ENCODE measurements at regions of chr1 and their contacts with region 1.

Region 1: GRCh38 chr1:151198255-151199127 is at the start of gene PIP5K1A:
- DNase-seq: peak; percentile 95
- ATAC-seq: peak; percentile 73
- H3K4me3 ChIP-seq: peak within 1 kb of the TSS; percentile 79 to 90
- H3K27ac ChIP-seq: peak within 1 kb of the TSS; percentile 83
- H3K4me1 ChIP-seq: peaks cover 26 to 40% of the 10 kb centered on the region in 2 experiments
- H3K27me3 ChIP-seq: no peaks in the 10 kb centered on the region
- CTCF ChIP-seq: no peak
- POLR2A ChIP-seq: peak; percentile 63
- RAD21 ChIP-seq: no peak
- total RNA-seq, gene PIP5K1A: 75.4 TPM

Region 2: DNA sequence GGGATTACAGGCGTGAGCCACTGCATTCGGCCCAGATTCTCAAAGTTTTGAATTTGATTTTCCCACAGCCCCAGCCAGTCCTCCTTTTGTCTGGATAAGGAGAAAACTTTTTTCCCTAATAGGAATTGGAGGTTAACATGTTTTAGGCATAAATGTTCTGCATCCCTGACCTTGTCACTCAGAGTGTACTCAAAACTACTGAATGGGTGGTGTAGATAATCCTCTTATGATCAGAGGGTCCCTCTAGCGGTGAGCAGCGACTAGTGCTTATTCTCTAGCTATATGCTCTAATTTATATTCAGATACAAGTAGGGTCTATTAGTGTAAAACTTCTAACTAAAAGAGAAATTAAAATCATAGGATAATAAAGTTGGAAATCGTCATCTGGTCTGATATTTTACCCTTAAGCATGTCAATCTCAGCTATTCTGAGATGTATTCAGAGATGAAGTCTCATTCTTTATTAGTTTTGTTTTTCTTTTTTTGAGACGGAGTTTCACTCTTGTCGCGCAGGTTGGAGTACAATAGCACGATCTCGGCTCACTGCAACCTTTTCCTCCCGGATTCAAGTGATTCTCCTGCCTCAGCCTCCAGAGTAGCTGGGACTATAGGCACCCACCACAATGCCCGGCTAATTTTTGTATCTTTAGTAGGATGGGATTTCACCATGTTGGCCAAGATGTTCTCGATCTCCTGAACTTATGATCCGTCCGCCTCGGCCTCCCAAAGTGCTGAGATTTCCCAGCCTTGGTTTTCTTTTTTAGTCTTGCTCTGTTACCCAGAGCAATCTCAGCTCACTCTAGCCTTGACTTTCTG is 53.4 kb after region 1 on chr1:
- CTCF ChIA-PET with region 1: interaction called, 12 read pairs
- POLR2A ChIA-PET with region 1: interaction called, 4 read pairs
- RAD21 ChIA-PET with region 1: interaction called in 1 of 2 experiments, 4 read pairs
- intact Hi-C with region 1: loop called (anchors 1 kb)
- DNase-seq: peak; percentile 60
- ATAC-seq: peak; percentile 63
- H3K4me3 ChIP-seq: no peak overlapping the region
- H3K27ac ChIP-seq: no peak overlapping the region
- H3K4me1 ChIP-seq: peaks cover 7 to 12% of the 10 kb centered on the region in 2 experiments; a peak in 3 of 4 replicates
- H3K27me3 ChIP-seq: no peaks in the 10 kb centered on the region
- CTCF ChIP-seq: peak; percentile 72 to 91 (median 84); a peak in 5 of 6 replicates
- POLR2A ChIP-seq: no peak
- RAD21 ChIP-seq: peak; percentile 77

Region 3: DNA sequence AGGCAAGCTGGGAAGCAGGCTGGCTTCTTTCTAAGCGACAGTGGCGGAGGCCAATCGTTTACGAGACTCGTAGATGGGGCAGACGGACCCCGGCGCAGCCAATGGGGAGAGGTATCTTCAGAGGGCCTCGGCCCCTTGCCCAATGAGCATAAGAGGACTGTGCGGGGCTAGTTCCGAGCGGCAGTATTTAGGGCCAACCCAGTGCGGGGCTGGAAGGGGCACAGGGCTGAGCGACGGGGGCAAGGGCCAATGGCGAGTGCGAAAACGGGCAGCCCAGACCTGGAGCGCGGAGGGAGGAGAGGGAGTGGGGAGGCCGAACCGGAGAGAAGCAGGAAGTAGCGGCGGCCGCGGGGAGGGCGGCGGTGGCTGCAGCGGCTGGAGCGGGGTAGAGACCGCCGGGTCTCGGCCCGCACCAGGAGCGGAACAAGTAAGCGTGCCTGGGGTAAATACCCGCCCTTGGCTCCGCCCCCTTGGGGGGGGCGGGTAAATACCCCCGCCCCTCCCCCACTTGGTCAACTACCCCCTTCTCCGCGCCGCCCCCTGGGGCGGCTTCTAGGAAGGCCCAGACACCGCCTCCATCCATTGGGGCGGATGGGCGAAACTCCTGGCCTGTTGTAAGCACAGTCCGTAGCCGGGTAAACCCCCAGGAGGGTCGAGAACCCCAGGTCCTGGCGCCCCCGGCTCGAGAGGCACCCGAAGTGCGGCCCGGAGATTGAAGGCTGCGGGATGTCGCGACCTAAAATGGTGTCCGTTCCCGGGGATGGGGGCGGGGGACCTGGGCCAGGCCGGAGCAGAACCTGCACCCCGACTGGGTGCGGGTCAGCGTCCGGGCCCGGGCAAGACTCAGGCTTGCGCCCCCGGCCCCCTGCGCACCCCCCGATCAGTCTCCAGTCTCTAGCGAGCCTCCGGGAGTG is 83.7 kb after region 1 on chr1 and contains the start of gene ZNF687:
- CTCF ChIA-PET with region 1: no interaction called
- POLR2A ChIA-PET with region 1: interaction called, 6 read pairs
- RAD21 ChIA-PET with region 1: interaction called in 1 of 2 experiments, 3 read pairs
- intact Hi-C with region 1: loop called (anchors 2 kb)
- DNase-seq: peak; percentile 100
- ATAC-seq: peak; percentile 92
- H3K4me3 ChIP-seq: peak within 1 kb of the TSS; percentile 59 to 79
- H3K27ac ChIP-seq: peak within 1 kb of the TSS; percentile 92
- H3K4me1 ChIP-seq: peaks cover 11 to 25% of the 10 kb centered on the region in 2 experiments
- H3K27me3 ChIP-seq: no peaks in the 10 kb centered on the region
- CTCF ChIP-seq: no peak
- POLR2A ChIP-seq: peak; percentile 32
- RAD21 ChIP-seq: no peak
- total RNA-seq, gene ZNF687: 34.3 TPM

Region 4: GRCh38 chr1:151311589-151312331 is 113.3 kb after region 1 on chr1:
- CTCF ChIA-PET with region 1: no interaction called
- POLR2A ChIA-PET with region 1: no interaction called
- RAD21 ChIA-PET with region 1: no interaction called
- intact Hi-C with region 1: loop called (anchors 1 kb)
- DNase-seq: peak; percentile 96
- ATAC-seq: peak; percentile 98
- H3K4me3 ChIP-seq: no peak overlapping the region
- H3K27ac ChIP-seq: peak overlapping the region; percentile 48; the same call in 1 of the 2 replicates
- H3K4me1 ChIP-seq: peaks cover 16 to 34% of the 10 kb centered on the region in 2 experiments
- H3K27me3 ChIP-seq: no peaks in the 10 kb centered on the region
- CTCF ChIP-seq: no peak
- POLR2A ChIP-seq: no peak
- RAD21 ChIP-seq: peak; percentile 24; the same call in 1 of the 2 replicates

Region 5: DNA sequence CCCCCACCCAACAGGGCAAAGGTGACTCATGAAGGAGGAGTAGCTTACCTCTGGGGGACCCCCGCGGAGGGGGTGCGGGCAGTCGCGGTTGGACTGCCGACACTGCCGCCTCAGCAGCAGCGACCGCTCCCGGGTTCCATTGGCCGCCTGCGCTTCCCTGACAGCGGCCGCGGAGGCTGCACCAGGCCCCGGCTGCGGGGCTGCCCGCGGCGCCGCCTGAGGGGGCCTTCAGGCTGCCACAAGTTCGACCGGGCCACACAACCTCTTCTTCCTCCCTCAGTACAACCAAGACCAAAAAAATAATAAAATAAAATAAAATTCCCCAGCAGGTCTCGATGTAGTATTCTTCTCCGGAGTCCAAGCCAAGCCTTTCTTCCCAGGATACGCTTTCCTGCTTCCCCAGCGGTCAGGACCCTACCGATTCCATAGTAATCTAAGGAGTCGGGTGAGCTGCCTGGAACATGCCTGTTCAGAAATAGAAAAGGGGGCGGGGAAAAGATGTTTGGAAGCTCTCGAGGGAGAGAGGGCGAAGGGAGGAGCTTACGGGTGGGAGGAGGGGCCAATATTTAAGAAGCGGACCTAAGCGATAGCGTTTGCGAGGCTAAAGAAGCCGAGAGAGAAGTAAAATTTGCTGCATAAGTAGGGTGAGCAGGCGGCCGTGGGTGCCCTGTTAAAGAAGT is 128.9 kb after region 1 on chr1 and contains the start of gene PI4KB:
- CTCF ChIA-PET with region 1: no interaction called
- POLR2A ChIA-PET with region 1: no interaction called
- RAD21 ChIA-PET with region 1: no interaction called
- intact Hi-C with region 1: loop called (anchors 5 kb)
- DNase-seq: peak; percentile 97
- ATAC-seq: peak; percentile 96
- H3K4me3 ChIP-seq: peak within 1 kb of the TSS; percentile 80 to 82
- H3K27ac ChIP-seq: peak within 1 kb of the TSS; percentile 80
- H3K4me1 ChIP-seq: peaks cover 12 to 24% of the 10 kb centered on the region in 2 experiments
- H3K27me3 ChIP-seq: no peaks in the 10 kb centered on the region
- CTCF ChIP-seq: no peak
- POLR2A ChIP-seq: peak; percentile 68
- RAD21 ChIP-seq: no peak
- total RNA-seq, gene PI4KB: 45.1 TPM

Region 6: DNA sequence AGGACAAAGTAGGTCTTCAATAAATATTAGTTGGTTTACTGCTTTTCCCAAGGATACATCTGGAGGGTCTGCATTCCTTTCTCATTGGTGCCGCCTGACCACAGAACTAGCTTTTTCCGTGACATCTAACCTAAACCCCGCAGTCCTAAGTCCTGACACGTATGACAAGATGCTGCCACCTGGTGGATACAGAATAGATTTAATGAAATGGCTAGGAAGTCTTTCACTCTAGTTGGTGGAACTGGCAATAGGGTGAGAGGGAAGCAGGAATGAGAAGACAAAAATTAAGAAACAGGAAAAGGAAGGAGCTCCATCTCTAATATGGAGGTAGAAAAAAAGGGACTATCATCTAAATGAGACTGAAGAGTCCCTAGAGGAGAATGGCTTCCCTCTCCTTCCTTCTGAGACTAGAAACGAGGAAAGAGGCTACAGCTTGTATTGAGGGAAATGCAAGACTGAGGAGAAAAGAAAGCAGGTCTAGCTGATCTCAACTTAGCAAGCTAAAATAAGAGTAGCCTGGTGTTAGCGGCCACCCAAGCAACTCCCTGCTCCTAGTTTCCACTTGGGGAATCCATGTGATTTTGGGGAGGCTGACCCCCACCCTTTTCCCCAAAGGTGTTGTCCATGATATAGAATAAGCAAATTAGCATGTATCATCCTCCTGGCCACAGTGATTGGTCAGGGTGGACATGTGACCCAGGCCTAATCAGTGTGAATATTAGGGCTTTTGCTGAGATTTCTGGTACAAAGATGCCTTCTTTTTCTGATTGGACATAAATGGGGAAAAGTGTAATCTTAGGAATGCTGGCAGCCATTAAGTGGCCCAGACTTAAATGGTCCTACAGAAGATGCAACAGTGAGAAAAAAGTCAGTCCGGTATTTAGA is 142.6 kb after region 1 on chr1:
- CTCF ChIA-PET with region 1: no interaction called
- POLR2A ChIA-PET with region 1: interaction called, 3 read pairs
- RAD21 ChIA-PET with region 1: no interaction called
- intact Hi-C with region 1: loop called (anchors 2 kb)
- DNase-seq: peak; percentile 75
- ATAC-seq: peak; percentile 92
- H3K4me3 ChIP-seq: no peak overlapping the region
- H3K27ac ChIP-seq: peak overlapping the region; percentile 12; the same call in 1 of the 2 replicates
- H3K4me1 ChIP-seq: peaks cover 0 to 20% of the 10 kb centered on the region in 2 experiments; a peak in 2 of 4 replicates
- H3K27me3 ChIP-seq: no peaks in the 10 kb centered on the region
- CTCF ChIP-seq: peak; percentile 55 to 94 (median 82); a peak in 5 of 6 replicates
- POLR2A ChIP-seq: no peak
- RAD21 ChIP-seq: peak; percentile 95

Region 7: GRCh38 chr1:151399890-151400495 is 201.5 kb after region 1 on chr1:
- CTCF ChIA-PET with region 1: no interaction called
- POLR2A ChIA-PET with region 1: no interaction called
- RAD21 ChIA-PET with region 1: no interaction called
- intact Hi-C with region 1: loop called (anchors 5 kb)
- DNase-seq: no peak
- ATAC-seq: peak; percentile 32
- H3K4me3 ChIP-seq: peak overlapping the region; percentile 86 to 98
- H3K27ac ChIP-seq: peak overlapping the region; percentile 81
- H3K4me1 ChIP-seq: peaks cover 4 to 26% of the 10 kb centered on the region in 2 experiments; a peak in 3 of 4 replicates
- H3K27me3 ChIP-seq: no peaks in the 10 kb centered on the region
- CTCF ChIP-seq: no peak
- POLR2A ChIP-seq: no peak
- RAD21 ChIP-seq: no peak

Measured in HCT116 (cell line).